A673 (cell line): ENCODE measurements at regions of chr11 and their contacts with region 1.

Region 1: GRCh38 chr11:124415356-124415923 is 9.2 kb downstream of the OR8B4 start:
- DNase-seq: peak; percentile 60
- H3K4me3 ChIP-seq: no peak overlapping the region
- H3K27ac ChIP-seq: no peak overlapping the region
- H3K4me1 ChIP-seq: no peaks in the 10 kb centered on the region
- H3K27me3 ChIP-seq: no peaks in the 10 kb centered on the region
- CTCF ChIP-seq: peak; percentile 91

Region 2: GRCh38 chr11:124277804-124278203 is 137.6 kb before region 1 on chr11:
- CTCF ChIA-PET with region 1: no interaction called
- POLR2A ChIA-PET with region 1: no interaction called
- intact Hi-C with region 1: no loop called
- DNase-seq: peak; percentile 37
- H3K4me3 ChIP-seq: no peak overlapping the region
- H3K27ac ChIP-seq: no peak overlapping the region
- H3K4me1 ChIP-seq: no peaks in the 10 kb centered on the region
- H3K27me3 ChIP-seq: no peaks in the 10 kb centered on the region
- CTCF ChIP-seq: peak; percentile 54

Region 3: GRCh38 chr11:124586238-124586860 is 170.9 kb after region 1 on chr11:
- CTCF ChIA-PET with region 1: interaction called, 5 read pairs
- POLR2A ChIA-PET with region 1: no interaction called
- intact Hi-C with region 1: loop called (anchors 1 kb)
- DNase-seq: peak; percentile 81
- H3K4me3 ChIP-seq: no peak overlapping the region
- H3K27ac ChIP-seq: no peak overlapping the region
- H3K4me1 ChIP-seq: no peaks in the 10 kb centered on the region
- H3K27me3 ChIP-seq: no peaks in the 10 kb centered on the region
- CTCF ChIP-seq: peak; percentile 75

Region 4: GRCh38 chr11:124758317-124759203 is 343.1 kb after region 1 on chr11:
- CTCF ChIA-PET with region 1: no interaction called
- POLR2A ChIA-PET with region 1: no interaction called
- intact Hi-C with region 1: loop called (anchors 10 kb)
- DNase-seq: peak; percentile 88
- H3K4me3 ChIP-seq: peak overlapping the region; percentile 37
- H3K27ac ChIP-seq: no peak overlapping the region
- H3K4me1 ChIP-seq: peaks cover 10% of the 10 kb centered on the region
- H3K27me3 ChIP-seq: no peaks in the 10 kb centered on the region
- CTCF ChIP-seq: peak; percentile 94